ENCODE measurements at regions of chr6 and their contacts with region 1.

Region 1: GRCh38 chr6:44172731-44173500 is 14.3 kb downstream of the CAPN11 start:
- DNase-seq: peak; percentile 76 to 91
- ATAC-seq: peak; percentile 71

Region 2: GRCh38 chr6:43436577-43437282 is 736.2 kb before region 1 on chr6:
- intact Hi-C with region 1: no loop called
- DNase-seq: peak; percentile 25 to 56
- ATAC-seq: peak; percentile 79

Region 3: DNA sequence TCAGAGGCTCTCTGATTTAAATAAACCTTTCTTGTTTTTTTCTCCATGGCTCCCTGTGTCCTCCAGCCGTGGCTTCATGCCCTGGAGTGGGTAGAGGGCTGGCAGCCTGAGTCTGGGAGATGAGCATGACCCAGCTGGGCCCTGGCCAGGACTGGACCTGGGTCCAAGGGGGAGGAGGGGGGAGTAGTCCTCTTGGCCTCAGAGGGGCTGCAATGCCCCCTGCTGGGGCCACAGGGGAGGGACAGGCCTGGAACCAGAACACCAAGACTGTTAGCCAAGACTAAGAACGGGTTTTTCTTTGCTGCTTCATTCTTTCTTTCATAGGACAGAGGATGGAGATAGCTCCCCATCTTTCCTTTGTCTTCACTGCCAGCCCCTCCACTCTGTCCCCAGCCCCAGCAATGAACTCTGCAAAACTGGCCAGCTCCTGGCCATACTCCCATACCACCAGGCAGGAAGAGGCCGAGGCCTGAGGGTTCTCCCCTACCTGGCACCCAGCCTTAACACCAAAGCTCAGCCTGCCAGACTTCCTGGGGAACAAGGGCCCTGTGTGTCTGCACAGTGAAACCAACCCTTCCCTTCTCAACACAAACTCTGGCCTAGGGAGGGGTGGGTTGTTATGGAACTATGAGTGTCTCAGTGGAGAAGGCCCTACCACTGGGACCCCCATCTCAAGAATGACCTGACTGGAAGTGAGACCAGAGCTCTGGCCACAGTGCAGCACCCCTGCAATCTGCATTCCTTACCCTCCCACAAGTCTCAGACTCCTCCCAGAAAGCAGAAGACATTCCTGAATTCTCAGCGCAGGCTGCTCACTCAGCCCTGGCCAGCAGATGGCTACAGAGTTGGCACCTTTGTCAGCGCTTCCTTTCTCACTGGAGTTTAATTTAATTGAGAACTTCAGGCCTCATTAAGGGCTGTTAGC is 61.4 kb after region 1 on chr6:
- intact Hi-C with region 1: loop called in 1 of 2 experiments (anchors 5 kb)
- DNase-seq: peak; percentile 58 to 82
- ATAC-seq: peak; percentile 30